ENCODE measurements at regions of chr5 and their contacts with region 1.

Region 1: GRCh38 chr5:59367791-59368394 is 525.6 kb downstream of the PDE4D start:
- DNase-seq: peak in 1 of 2 experiments; percentile 84
- ATAC-seq: peak; percentile 76 to 80; a peak in 5 of 6 replicates
- H3K4me3 ChIP-seq: no peak overlapping the region
- H3K27ac ChIP-seq: peak overlapping the region; percentile 64 to 86
- H3K4me1 ChIP-seq: peaks cover 87% of the 10 kb centered on the region
- CTCF ChIP-seq: peak; percentile 94
- EP300 ChIP-seq: no peak
- POLR2A ChIP-seq: no peak
- RAD21 ChIP-seq: peak; percentile 87

Region 2: GRCh38 chr5:58972301-58972700 is 395.6 kb before region 1 on chr5:
- CTCF ChIA-PET with region 1: no interaction called
- POLR2A ChIA-PET with region 1: interaction called, 10 read pairs
- DNase-seq: no peak
- ATAC-seq: no peak
- H3K4me3 ChIP-seq: no peak overlapping the region
- H3K27ac ChIP-seq: peak overlapping the region; percentile 49 to 68; a peak in 5 of 6 replicates
- H3K4me1 ChIP-seq: peaks cover 99% of the 10 kb centered on the region
- CTCF ChIP-seq: no peak
- EP300 ChIP-seq: no peak
- POLR2A ChIP-seq: no peak
- RAD21 ChIP-seq: no peak

Region 3: GRCh38 chr5:59193616-59194319 is 174.1 kb before region 1 on chr5:
- CTCF ChIA-PET with region 1: interaction called, 58 read pairs
- POLR2A ChIA-PET with region 1: no interaction called
- DNase-seq: peak; percentile 83 to 98
- ATAC-seq: peak; percentile 96 to 100
- H3K4me3 ChIP-seq: peak overlapping the region; percentile 18; the same call in 2 of the 3 replicates
- H3K27ac ChIP-seq: peak overlapping the region; percentile 82 to 84
- H3K4me1 ChIP-seq: peaks cover 94% of the 10 kb centered on the region
- CTCF ChIP-seq: no peak
- EP300 ChIP-seq: peak; percentile 56 to 84; a peak in 3 of 5 replicates
- POLR2A ChIP-seq: no peak
- RAD21 ChIP-seq: peak in 1 of 2 experiments; percentile 32; a peak in 2 of 5 replicates

Region 4: GRCh38 chr5:59216841-59217240 is 151.1 kb before region 1 on chr5:
- CTCF ChIA-PET with region 1: interaction called, 10 read pairs
- POLR2A ChIA-PET with region 1: no interaction called
- DNase-seq: peak in 1 of 2 experiments; percentile 43
- ATAC-seq: peak in 1 of 2 experiments; percentile 14; a peak in 2 of 6 replicates
- H3K4me3 ChIP-seq: no peak overlapping the region
- H3K27ac ChIP-seq: peak overlapping the region; percentile 63 to 79
- H3K4me1 ChIP-seq: peaks cover 99% of the 10 kb centered on the region
- CTCF ChIP-seq: no peak
- EP300 ChIP-seq: no peak
- POLR2A ChIP-seq: no peak
- RAD21 ChIP-seq: no peak

Region 5: DNA sequence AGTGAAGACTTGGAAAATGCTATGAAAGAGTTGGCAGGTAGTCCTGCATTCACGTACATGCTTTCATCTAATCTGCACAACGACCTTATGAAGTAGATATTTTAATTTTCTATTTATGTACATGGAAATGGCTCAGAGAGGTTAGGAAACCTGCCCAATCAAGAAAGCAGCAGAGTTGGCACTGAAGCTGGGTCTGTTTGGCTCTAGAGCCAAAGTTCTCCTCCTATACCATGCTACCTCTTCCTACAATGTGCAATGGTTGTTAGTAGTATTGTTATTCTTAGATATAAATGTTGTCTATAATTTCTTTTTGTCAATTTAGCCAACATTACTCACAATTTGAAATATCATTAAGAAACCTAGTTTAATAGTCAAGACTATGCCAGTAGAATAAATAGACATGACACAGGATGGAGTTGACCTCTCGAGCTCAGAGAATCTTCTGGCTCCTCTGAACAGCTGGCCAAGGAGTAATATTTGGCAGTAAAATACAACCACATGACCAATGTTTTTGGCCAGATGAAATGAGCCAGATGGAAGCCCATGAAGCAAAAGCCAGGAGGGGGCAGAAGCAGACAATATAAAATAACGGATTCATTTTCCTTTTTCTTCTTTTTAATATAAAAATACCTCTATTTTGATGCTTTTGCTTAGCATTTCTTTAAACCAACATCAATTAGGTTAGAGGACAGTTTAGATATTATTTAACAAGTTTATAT is 16.7 kb before region 1 on chr5:
- CTCF ChIA-PET with region 1: interaction called, 27 read pairs
- POLR2A ChIA-PET with region 1: no interaction called
- DNase-seq: no peak
- ATAC-seq: peak in 1 of 2 experiments; percentile 35; a peak in 2 of 6 replicates
- H3K4me3 ChIP-seq: no peak overlapping the region
- H3K27ac ChIP-seq: peak overlapping the region; percentile 78 to 86; a peak in 4 of 6 replicates
- H3K4me1 ChIP-seq: peaks cover 100% of the 10 kb centered on the region
- CTCF ChIP-seq: no peak; the same call in 2 of the 3 replicates
- EP300 ChIP-seq: no peak
- POLR2A ChIP-seq: no peak
- RAD21 ChIP-seq: no peak

Region 6: GRCh38 chr5:59380350-59380951 is 12.6 kb after region 1 on chr5:
- CTCF ChIA-PET with region 1: interaction called, 32 read pairs
- POLR2A ChIA-PET with region 1: no interaction called
- DNase-seq: peak in 1 of 2 experiments; percentile 92
- ATAC-seq: peak; percentile 84 to 86
- H3K4me3 ChIP-seq: no peak overlapping the region
- H3K27ac ChIP-seq: peak overlapping the region; percentile 45 to 73
- H3K4me1 ChIP-seq: peaks cover 58% of the 10 kb centered on the region
- CTCF ChIP-seq: peak; percentile 66
- EP300 ChIP-seq: no peak
- POLR2A ChIP-seq: no peak
- RAD21 ChIP-seq: peak; percentile 78 to 83

Measured in A549 (cell line).